ENCODE measurements at regions of chr21 and their contacts with region 1.

Region 1: GRCh38 chr21:41068967-41069642 is 98.9 kb upstream of the BACE2 start:
- DNase-seq: peak; percentile 82
- H3K4me3 Mint-ChIP-seq: peak overlapping the region; percentile 38
- H3K27ac Mint-ChIP-seq: no peak overlapping the region
- H3K4me1 Mint-ChIP-seq: peaks cover 9% of the 10 kb centered on the region
- H3K27me3 Mint-ChIP-seq: peaks cover 32% of the 10 kb centered on the region

Region 2: GRCh38 chr21:40143822-40144525 is 925.1 kb before region 1 on chr21:
- CTCF ChIA-PET with region 1: interaction called, 4 read pairs
- intact Hi-C with region 1: loop called (anchors 1 kb)
- DNase-seq: peak; percentile 61
- H3K4me3 Mint-ChIP-seq: no peak overlapping the region
- H3K27ac Mint-ChIP-seq: no peak overlapping the region
- H3K4me1 Mint-ChIP-seq: no peaks in the 10 kb centered on the region
- H3K27me3 Mint-ChIP-seq: no peaks in the 10 kb centered on the region

Region 3: DNA sequence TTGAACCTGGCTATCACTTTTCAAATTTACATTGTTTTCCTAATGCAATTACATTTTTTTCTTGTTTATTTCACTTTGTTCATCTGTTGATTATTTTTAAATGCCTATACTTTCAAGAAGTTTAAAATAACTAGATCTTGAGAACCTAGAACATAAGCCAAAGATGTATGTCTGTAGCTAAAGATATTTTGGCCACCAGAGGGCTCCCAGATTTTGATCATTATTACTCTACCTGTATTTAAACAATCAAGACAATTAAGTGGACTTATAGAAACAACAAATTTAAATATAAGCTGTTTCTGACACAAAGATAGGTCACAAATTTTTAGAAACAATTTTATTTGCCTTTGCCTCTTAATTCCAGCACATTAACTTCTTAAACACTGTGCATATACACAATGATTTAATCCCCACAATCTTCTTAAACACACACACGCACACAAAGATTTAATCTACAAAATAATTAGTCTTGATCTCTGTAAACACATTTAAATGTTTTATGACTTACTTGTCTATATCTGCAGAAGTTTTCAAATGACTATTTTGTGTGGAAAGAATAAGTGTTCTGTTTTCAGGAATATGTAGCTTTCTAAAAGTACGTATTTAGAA is 602.1 kb before region 1 on chr21:
- CTCF ChIA-PET with region 1: no interaction called
- intact Hi-C with region 1: loop called (anchors 5 kb)
- DNase-seq: no peak
- H3K4me3 Mint-ChIP-seq: no peak overlapping the region
- H3K27ac Mint-ChIP-seq: no peak overlapping the region
- H3K4me1 Mint-ChIP-seq: no peaks in the 10 kb centered on the region
- H3K27me3 Mint-ChIP-seq: peaks cover 15% of the 10 kb centered on the region

Region 4: DNA sequence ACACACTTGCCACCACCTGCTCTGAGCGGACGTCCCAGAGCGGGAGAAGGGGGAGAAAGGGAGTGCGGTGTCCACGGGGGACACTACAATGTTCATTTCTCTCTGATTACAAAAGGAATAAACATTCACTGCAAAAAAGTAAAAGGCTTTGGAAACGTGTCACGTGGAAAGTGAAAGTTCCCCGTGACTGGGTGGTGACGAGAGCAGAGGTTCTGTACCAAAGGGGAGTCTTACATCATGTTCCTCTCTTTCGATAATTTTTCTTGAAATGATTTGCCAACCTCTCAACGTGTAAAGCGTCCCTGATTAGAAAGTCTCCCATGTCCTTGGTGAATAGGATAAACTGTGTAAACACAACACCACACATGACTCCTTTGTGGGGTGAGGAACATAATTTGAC is 832.0 kb after region 1 on chr21:
- CTCF ChIA-PET with region 1: no interaction called
- intact Hi-C with region 1: no loop called
- DNase-seq: peak; percentile 78
- H3K4me3 Mint-ChIP-seq: no peak overlapping the region
- H3K27ac Mint-ChIP-seq: peak overlapping the region; percentile 75
- H3K4me1 Mint-ChIP-seq: peaks cover 26% of the 10 kb centered on the region
- H3K27me3 Mint-ChIP-seq: no peaks in the 10 kb centered on the region